ENCODE measurements at regions of chr14 and their contacts with region 1.

Region 1: DNA sequence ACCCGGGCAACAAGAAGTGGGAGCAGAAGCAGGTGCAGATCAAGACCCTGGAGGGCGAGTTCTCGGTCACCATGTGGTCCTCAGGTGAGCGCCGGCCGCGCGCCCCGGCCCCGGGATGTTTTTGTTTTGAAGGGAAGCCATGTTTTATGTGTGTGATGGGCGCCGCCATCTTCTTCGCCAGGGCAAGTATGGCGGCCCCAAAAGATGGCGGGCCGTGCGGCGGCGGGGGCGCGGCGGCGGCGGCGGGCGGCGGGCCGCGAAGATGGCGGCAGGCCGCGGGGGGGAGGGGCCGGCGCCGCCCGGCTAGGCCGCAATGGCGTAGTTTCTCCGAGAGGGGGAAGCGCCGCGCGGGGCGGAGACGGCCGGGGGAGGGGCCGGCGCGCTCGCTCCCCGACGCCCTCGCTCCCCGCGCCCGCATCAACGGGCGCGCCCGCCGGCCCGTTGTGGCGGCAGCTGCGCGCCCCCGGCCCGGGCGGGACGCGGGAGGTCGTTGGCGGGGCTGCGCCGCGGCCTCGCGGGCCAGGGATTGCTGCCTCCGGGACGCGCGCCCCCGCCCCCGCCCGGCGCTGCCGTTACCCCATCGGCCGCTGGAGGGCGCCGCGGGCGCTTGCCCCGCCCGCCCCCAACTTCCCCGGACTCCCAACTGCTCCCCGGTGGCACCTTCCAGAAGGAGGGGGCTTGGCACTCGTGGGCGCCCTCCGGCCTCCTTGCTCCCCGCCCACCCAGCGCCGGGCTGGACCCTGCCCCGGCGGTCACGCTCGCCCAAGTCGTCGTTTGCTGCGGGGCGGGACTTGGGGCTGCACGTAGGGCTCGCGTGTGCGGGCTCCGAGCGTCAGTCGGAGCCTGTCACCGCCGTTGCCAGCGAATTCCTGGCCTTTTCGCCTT is 1.1 kb downstream of the YY1 start:
- DNase-seq: peak; percentile 96
- H3K4me3 ChIP-seq: peak overlapping the region; percentile 77 to 100 (median 92)
- H3K27ac ChIP-seq: peak overlapping the region; percentile 99 to 100 (median 100)
- H3K4me1 ChIP-seq: peaks cover 49 to 69% (median 64%) of the 10 kb centered on the region in 4 donors
- H3K27me3 ChIP-seq: no peaks in the 10 kb centered on the region
- CTCF ChIP-seq: peak; percentile 74 to 87 (median 76)
- EP300 ChIP-seq: no peak
- POLR2A ChIP-seq: peak; percentile 25

Region 2: GRCh38 chr14:100213956-100214774 is 25.9 kb before region 1 on chr14:
- intact Hi-C with region 1: loop called (anchors 2 kb)
- DNase-seq: peak; percentile 95
- H3K4me3 ChIP-seq: peak overlapping the region; percentile 90 to 98 (median 93)
- H3K27ac ChIP-seq: peak overlapping the region; percentile 96 to 99 (median 98)
- H3K4me1 ChIP-seq: peaks cover 11 to 24% (median 19%) of the 10 kb centered on the region in 4 donors
- H3K27me3 ChIP-seq: no peaks in the 10 kb centered on the region
- CTCF ChIP-seq: no peak
- EP300 ChIP-seq: no peak
- POLR2A ChIP-seq: peak; percentile 53

Region 3: DNA sequence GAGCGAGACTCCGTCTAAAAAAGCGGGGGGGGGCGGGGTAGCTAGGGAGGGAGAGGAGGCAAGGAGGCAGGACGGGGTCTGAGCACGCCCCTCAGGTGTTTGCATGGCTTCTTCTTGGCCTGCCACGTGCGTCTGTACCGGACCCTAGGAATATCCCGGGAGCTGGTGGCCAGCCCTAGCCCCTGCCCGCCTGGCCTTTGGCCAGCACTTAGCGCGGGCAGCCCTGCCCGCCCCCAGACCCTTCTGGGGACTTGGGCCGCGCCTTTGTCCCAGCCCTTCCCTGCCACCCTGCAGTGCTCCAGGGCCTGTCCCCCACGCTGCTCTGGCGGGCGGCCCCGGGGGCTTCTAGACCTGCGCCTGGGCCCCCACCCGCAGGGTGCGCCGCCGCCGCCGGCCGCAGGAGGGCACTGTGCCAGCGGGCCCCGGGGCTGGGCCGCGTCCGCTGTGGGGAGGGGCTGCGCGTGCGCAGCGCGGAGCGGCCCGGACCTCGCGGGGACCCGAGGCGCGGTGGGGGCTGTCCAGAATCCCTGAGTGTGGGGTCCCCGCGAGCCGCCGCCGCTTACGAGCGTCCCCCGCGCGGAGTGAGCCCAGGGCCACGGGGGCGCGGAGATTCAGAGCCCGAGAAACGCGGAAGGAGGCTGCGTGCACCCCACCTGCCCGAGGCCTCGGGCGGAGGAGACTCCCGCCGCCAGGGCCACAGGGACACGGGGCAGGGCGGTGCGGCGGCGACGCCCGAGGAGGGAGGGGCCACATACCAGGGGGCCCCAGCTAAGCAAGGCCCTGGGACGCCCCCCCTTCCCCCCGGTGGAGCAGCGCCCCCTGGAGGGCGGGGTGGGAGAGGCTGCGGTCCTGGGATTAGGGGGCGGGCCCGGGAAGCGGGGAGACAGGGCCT is 45.2 kb after region 1 on chr14:
- intact Hi-C with region 1: loop called (anchors 5 kb)
- DNase-seq: no peak
- H3K4me3 ChIP-seq: peak overlapping the region; percentile 81 to 95 (median 87)
- H3K27ac ChIP-seq: peak overlapping the region; percentile 91 to 93 (median 92)
- H3K4me1 ChIP-seq: peaks cover 17 to 45% (median 30%) of the 10 kb centered on the region in 4 donors
- H3K27me3 ChIP-seq: no peaks in the 10 kb centered on the region
- CTCF ChIP-seq: peak; percentile 63 to 84 (median 70)
- EP300 ChIP-seq: no peak
- POLR2A ChIP-seq: no peak

Measured in esophagus muscularis mucosa (tissue), 4 donors.